ENCODE measurements at regions of chr14 and their contacts with region 1.

Region 1: DNA sequence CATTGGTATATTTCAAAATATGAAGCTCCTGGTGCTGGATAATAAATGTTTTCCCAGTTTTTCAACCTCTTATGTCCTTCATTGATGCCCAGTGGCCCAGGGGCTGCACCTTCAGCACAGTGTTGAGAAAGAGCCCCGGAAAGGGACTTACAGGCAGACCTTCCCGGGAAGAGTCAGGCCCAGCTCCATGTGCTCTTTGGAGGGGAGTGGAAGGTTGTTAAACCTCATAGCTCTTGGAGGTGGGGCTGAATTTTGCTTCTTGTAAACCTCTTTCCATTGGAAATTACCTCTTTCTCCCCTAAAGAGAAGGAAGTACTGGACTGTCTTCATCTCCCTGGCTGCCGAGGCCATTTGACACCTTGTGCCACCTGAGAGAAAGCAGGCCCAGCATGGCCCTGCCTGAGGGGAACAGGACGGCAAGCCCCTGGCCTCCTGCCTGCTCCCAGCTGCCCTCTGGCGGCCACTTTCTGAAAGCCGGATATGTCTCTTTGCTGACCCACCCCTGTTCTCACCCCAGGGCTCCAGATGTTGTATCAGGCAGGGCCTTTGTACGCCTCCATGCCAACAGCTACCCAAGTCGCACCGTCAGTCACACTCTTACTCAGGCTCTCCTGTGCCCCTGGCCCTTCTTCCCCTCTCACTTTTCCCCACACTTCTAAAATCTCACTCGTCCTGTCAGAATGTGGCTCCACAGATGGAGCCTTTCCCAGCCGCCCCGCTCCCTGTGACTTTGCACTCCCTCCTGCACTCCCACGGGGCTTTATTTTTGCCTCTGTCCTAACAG is 43.0 kb downstream of the EVL start:
- DNase-seq: peak; percentile 95
- H3K4me3 Mint-ChIP-seq: peak overlapping the region; percentile 40
- H3K27ac Mint-ChIP-seq: peak overlapping the region; percentile 86
- H3K4me1 Mint-ChIP-seq: peaks cover 66% of the 10 kb centered on the region
- H3K27me3 Mint-ChIP-seq: no peaks in the 10 kb centered on the region

Region 2: GRCh38 chr14:99982537-99983250 is 125.5 kb before region 1 on chr14:
- intact Hi-C with region 1: loop called (anchors 1 kb)
- DNase-seq: peak; percentile 89
- H3K4me3 Mint-ChIP-seq: no peak overlapping the region
- H3K27ac Mint-ChIP-seq: no peak overlapping the region
- H3K4me1 Mint-ChIP-seq: peaks cover 16% of the 10 kb centered on the region
- H3K27me3 Mint-ChIP-seq: no peaks in the 10 kb centered on the region

Region 3: DNA sequence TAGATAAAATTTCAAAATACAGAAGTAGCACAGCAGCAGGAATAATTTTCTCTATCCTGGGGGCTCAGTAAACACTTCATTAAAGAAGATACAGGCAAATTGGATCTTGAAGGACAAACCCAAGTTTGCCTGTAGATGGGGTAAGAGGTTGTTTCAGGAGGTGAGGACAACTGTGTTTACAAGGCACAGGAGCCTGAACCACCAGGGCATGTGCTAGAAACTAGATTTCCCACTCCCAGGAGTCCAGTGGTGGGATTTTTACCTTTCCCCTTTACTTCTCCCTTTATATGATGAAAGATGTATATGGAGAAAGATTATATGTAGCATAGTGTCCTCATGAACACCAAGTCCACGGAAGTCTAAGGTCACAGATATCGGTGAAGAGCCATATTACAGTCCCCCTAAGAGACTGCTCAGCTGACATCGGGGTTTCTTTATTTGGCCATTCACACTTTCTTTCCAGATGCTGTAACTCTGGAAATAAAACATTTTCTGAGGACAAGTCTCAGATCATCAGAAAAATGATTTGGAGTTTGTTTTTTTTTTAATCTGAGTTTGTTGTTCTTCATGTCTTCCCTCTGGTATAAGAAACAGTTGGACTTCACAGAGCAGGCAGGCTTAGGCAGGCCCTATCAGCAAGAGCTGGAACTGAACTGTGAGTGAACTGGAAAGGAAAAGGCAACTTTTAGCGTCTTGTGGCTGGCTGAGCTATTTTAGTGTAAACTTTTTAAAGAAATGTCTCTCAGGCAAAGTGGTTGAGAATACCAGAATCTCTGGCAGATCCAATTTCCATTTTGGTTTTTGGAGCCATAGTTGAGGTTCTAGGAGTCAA is 51.1 kb before region 1 on chr14:
- intact Hi-C with region 1: loop called (anchors 1 kb)
- DNase-seq: peak; percentile 82
- H3K4me3 Mint-ChIP-seq: peak overlapping the region; percentile 67
- H3K27ac Mint-ChIP-seq: peak overlapping the region; percentile 91
- H3K4me1 Mint-ChIP-seq: peaks cover 55% of the 10 kb centered on the region
- H3K27me3 Mint-ChIP-seq: no peaks in the 10 kb centered on the region

Region 4: GRCh38 chr14:100078991-100079725 is 29.1 kb before region 1 on chr14:
- intact Hi-C with region 1: loop called (anchors 1 kb)
- DNase-seq: peak; percentile 95
- H3K4me3 Mint-ChIP-seq: peak overlapping the region; percentile 79
- H3K27ac Mint-ChIP-seq: peak overlapping the region; percentile 91
- H3K4me1 Mint-ChIP-seq: peaks cover 93% of the 10 kb centered on the region
- H3K27me3 Mint-ChIP-seq: no peaks in the 10 kb centered on the region

Region 5: GRCh38 chr14:100096570-100096971 is 11.7 kb before region 1 on chr14:
- intact Hi-C with region 1: no loop called
- DNase-seq: no peak
- H3K4me3 Mint-ChIP-seq: no peak overlapping the region
- H3K27ac Mint-ChIP-seq: peak overlapping the region; percentile 84
- H3K4me1 Mint-ChIP-seq: peaks cover 84% of the 10 kb centered on the region
- H3K27me3 Mint-ChIP-seq: no peaks in the 10 kb centered on the region